HCT116 (cell line): ENCODE measurements at regions of chr7 and their contacts with region 1.

Region 1: GRCh38 chr7:158572003-158572828 is 15.4 kb downstream of the PTPRN2 start:
- DNase-seq: no peak
- ATAC-seq: peak; percentile 75
- H3K4me3 ChIP-seq: no peak overlapping the region
- H3K27ac ChIP-seq: no peak overlapping the region
- H3K4me1 ChIP-seq: no peaks in the 10 kb centered on the region
- H3K27me3 ChIP-seq: no peaks in the 10 kb centered on the region
- CTCF ChIP-seq: peak in 1 of 3 experiments; percentile 17; a peak in 1 of 6 replicates
- POLR2A ChIP-seq: no peak
- RAD21 ChIP-seq: peak; percentile 37; the same call in 1 of the 2 replicates

Region 2: DNA sequence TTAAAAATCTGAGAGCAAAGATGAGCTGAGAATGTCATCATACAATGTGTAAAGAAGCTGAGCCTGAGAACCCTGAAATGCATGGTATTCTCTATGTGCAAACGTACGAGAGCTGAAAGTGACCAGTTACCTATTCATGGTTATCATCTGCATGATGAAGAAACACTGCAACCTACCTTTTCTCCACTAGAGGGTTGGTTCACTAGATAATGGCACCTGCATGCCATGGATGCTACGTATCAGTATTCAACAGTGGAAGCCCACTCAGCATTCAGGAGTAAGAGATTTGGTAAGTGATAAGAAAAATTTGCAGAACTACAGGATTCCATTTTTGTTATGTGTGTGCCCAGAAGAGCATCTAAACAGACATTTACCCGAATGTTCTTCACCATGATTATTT is 130.0 kb before region 1 on chr7:
- CTCF ChIA-PET with region 1: no interaction called
- POLR2A ChIA-PET with region 1: no interaction called
- RAD21 ChIA-PET with region 1: no interaction called
- intact Hi-C with region 1: loop called (anchors 2 kb)
- DNase-seq: peak; percentile 22
- ATAC-seq: peak; percentile 77
- H3K4me3 ChIP-seq: no peak overlapping the region
- H3K27ac ChIP-seq: no peak overlapping the region
- H3K4me1 ChIP-seq: no peaks in the 10 kb centered on the region
- H3K27me3 ChIP-seq: no peaks in the 10 kb centered on the region; the same call in 1 of the 2 replicates
- CTCF ChIP-seq: peak; percentile 24 to 68 (median 65); a peak in 5 of 6 replicates
- POLR2A ChIP-seq: no peak
- RAD21 ChIP-seq: peak; percentile 56

Region 3: DNA sequence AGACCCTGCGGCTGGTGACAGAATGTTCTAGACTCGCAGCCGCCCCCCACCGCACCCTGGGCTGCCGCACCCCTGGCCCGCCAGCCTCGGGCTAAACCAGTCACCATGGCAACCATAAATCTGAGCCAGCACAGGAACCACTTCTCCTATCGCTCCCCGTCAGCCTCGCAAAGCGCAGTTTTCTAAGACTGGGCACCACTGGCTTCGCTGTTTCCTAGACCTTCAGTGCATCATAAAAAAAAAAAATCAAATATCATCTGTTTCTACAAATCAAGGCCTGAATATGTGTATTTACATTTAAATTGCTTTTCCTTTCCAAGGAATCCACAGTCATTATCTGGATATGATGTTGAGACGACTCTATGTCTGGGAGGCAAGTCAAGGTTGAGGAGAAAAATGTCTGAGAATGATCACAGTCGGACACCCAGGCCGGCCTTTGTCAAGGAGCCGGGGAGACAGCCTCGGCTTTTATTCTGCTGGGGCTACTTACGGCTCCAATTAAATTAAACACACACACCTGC is 84.5 kb before region 1 on chr7:
- CTCF ChIA-PET with region 1: no interaction called
- POLR2A ChIA-PET with region 1: no interaction called
- RAD21 ChIA-PET with region 1: no interaction called
- intact Hi-C with region 1: no loop called
- DNase-seq: no peak
- ATAC-seq: no peak
- H3K4me3 ChIP-seq: no peak overlapping the region
- H3K27ac ChIP-seq: no peak overlapping the region
- H3K4me1 ChIP-seq: no peaks in the 10 kb centered on the region
- H3K27me3 ChIP-seq: no peaks in the 10 kb centered on the region
- CTCF ChIP-seq: no peak
- POLR2A ChIP-seq: no peak
- RAD21 ChIP-seq: no peak

Region 4: DNA sequence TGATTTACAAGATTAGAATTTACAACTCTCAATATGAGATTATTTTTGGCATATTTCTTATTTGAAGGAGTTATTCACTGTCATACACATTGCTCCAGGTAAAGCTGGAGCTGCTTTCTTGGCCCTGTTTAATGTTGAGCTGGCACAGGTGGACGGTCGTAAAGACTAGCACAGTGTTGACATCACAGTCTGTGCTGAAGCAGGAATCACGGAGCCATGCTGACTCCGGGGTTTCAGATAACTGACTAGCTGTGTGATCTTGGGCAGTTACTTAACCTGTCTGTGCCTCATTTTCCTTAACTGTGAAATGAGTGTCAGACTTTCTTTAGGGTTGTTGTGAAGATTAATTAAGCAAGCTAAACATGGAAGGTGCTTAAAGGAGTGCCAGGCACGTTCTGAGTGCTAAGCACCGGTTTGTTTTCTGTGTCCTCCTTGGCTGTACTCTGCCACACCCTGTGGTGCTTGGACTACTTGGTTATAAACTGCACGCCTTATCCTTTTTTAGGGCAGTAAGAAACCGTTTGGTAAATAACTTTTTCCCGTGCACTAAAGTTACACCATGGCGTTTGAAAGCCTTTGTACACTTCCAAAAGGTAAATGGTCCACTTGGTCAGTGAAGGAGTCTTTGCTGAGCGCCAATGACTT is 331.8 kb after region 1 on chr7:
- CTCF ChIA-PET with region 1: no interaction called
- POLR2A ChIA-PET with region 1: no interaction called
- RAD21 ChIA-PET with region 1: no interaction called
- intact Hi-C with region 1: no loop called
- DNase-seq: no peak
- ATAC-seq: no peak
- H3K4me3 ChIP-seq: no peak overlapping the region
- H3K27ac ChIP-seq: no peak overlapping the region
- H3K4me1 ChIP-seq: no peaks in the 10 kb centered on the region
- H3K27me3 ChIP-seq: no peaks in the 10 kb centered on the region
- CTCF ChIP-seq: no peak
- POLR2A ChIP-seq: no peak
- RAD21 ChIP-seq: no peak